Endothelial cell of umbilical vein (primary cell): ENCODE measurements at regions of chr7 and their contacts with region 1.

Region 1: DNA sequence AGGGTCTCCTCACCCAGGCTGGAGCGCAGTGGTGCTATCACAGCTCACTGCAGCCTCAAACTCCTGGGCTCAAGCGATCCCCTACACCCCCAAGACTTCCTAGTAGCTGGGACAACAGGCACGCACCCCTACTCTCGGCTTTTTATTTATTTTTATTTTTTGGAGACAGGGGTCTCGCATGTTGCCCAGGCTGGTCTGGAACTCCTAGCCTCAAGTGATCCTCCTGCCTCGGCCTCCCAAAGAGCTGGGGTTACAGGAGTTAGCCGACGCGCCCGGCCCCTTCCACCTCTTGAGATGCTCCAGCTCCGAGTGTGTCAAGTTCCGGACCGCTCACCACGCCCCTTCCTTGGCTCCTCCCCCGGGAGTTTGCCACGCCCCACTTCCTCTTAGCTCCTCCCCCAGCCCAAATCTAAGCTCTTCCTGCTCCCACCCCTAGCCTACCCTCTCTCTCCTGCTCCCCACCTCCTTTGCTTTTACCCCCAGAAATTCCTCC is 6.3 kb downstream of the NAT16 start:
- DNase-seq: peak; percentile 26
- H3K4me3 ChIP-seq: no peak overlapping the region
- H3K27ac ChIP-seq: no peak overlapping the region
- H3K4me1 ChIP-seq: no peaks in the 10 kb centered on the region
- H3K27me3 ChIP-seq: peaks cover 80 to 83% of the 10 kb centered on the region in 2 experiments
- CTCF ChIP-seq: no peak
- POLR2A ChIP-seq: no peak

Region 2: DNA sequence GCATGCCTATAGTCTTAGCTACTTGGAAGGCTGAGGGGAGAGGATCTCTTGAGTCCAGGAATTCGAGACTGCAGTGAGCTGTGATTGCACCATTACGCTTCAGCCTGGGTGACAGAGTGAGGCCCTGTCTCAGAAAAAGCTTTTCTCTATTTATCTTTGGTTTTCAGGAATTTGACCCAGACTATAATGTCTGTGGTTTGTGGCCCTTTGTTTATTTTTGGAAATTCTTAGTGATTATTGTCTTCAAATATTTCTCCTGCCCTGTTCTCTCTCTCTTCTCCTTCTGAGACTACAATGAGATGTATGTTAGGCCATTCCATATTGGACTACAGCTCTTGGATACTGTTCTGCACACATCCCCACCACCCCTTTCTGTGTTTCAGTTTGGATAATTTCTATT is 199.8 kb before region 1 on chr7:
- CTCF ChIA-PET with region 1: no interaction called
- POLR2A ChIA-PET with region 1: no interaction called
- dilution Hi-C with region 1: no loop called
- intact Hi-C with region 1: no loop called
- DNase-seq: no peak
- H3K4me3 ChIP-seq: no peak overlapping the region
- H3K27ac ChIP-seq: no peak overlapping the region
- H3K4me1 ChIP-seq: no peaks in the 10 kb centered on the region
- H3K27me3 ChIP-seq: peaks cover 0 to 2% of the 10 kb centered on the region in 2 experiments
- CTCF ChIP-seq: no peak
- POLR2A ChIP-seq: no peak

Region 3: GRCh38 chr7:101066141-101066832 is 107.5 kb before region 1 on chr7:
- CTCF ChIA-PET with region 1: no interaction called
- POLR2A ChIA-PET with region 1: no interaction called
- dilution Hi-C with region 1: no loop called
- intact Hi-C with region 1: no loop called
- DNase-seq: no peak
- H3K4me3 ChIP-seq: no peak overlapping the region
- H3K27ac ChIP-seq: no peak overlapping the region
- H3K4me1 ChIP-seq: no peaks in the 10 kb centered on the region
- H3K27me3 ChIP-seq: no peaks in the 10 kb centered on the region
- CTCF ChIP-seq: no peak
- POLR2A ChIP-seq: no peak

Region 4: GRCh38 chr7:101185258-101185839 is 11.6 kb after region 1 on chr7:
- CTCF ChIA-PET with region 1: interaction called, 39 read pairs
- POLR2A ChIA-PET with region 1: no interaction called
- dilution Hi-C with region 1: no loop called
- intact Hi-C with region 1: no loop called
- DNase-seq: no peak
- H3K4me3 ChIP-seq: no peak overlapping the region
- H3K27ac ChIP-seq: no peak overlapping the region
- H3K4me1 ChIP-seq: no peaks in the 10 kb centered on the region
- H3K27me3 ChIP-seq: peaks cover 6 to 10% of the 10 kb centered on the region in 2 experiments
- CTCF ChIP-seq: no peak
- POLR2A ChIP-seq: no peak